Tibial artery (tissue), 4 donors: ENCODE measurements at regions of chr1 and their contacts with region 1.

Region 1: DNA sequence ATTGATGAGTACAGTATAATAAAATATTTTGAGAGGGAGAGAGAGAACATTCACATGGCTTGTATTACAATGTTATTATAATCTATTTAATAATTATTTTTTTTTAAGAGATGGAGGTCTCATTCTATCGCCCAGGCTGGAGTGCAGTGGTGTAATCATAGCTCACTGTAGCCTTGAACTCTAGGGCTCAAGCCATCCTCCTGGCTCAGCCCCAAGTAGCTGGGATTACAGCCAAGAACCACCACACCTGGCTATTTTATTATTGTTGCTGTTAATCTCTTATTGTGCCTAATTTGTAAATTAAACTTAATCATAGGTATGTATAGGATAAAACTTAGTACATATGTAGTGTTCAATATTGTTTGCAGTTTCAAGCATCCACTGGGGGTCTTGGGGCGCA is 57.8 kb downstream of the HS2ST1 start:
- DNase-seq: no peak
- H3K4me3 ChIP-seq: no peak overlapping the region
- H3K27ac ChIP-seq: no peak overlapping the region
- H3K4me1 ChIP-seq: peaks cover 0 to 12% (median 2%) of the 10 kb centered on the region in 4 donors
- H3K27me3 ChIP-seq: no peaks in the 10 kb centered on the region
- CTCF ChIP-seq: no peak

Region 2: DNA sequence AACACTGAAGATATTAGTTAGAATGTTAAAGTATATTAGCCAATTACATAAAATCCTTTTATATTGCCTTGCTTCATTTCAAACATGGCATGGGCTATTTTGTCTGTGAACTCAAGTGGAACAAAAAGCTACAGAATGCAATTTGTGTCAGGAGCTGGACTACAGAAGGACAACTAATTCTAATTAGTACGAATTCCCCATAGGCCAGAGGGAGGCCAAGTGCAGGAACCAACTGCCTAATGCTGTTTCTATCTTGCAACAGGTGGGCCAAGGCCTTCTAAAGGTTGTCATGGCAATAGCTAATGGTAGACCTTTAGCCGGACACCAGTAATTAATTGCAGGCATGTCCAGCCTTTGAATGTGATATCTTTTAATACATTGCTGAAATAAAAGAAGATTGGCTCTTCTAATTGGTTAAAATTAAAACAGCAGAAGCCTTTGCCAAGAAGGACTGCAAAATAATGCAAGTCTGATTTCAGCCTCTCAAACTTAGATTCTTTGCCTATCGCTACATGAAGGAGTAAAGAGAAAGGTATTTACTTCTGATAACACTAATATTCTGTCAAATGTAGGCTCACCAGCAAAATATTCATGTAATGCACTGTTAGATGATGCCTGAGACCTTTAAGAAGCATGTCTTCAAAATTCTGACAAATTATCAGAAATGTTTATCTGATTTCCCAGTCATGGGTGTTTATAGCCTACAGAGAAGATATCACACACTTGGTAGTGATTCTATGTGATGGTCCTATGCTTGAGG is 588.5 kb after region 1 on chr1:
- intact Hi-C with region 1: loop called (anchors 10 kb)
- DNase-seq: no peak
- H3K4me3 ChIP-seq: no peak overlapping the region
- H3K27ac ChIP-seq: no peak overlapping the region
- H3K4me1 ChIP-seq: no peaks in the 10 kb centered on the region
- H3K27me3 ChIP-seq: no peaks in the 10 kb centered on the region
- CTCF ChIP-seq: no peak